Head of caudate nucleus (tissue), 42 donors: ENCODE measurements at regions of chr1 and their contacts with region 1.

Region 1: GRCh38 chr1:53238197-53239155 is at the start of gene MAGOH:
- DNase-seq: peak; percentile 91 to 99 (median 97)

Region 2: DNA sequence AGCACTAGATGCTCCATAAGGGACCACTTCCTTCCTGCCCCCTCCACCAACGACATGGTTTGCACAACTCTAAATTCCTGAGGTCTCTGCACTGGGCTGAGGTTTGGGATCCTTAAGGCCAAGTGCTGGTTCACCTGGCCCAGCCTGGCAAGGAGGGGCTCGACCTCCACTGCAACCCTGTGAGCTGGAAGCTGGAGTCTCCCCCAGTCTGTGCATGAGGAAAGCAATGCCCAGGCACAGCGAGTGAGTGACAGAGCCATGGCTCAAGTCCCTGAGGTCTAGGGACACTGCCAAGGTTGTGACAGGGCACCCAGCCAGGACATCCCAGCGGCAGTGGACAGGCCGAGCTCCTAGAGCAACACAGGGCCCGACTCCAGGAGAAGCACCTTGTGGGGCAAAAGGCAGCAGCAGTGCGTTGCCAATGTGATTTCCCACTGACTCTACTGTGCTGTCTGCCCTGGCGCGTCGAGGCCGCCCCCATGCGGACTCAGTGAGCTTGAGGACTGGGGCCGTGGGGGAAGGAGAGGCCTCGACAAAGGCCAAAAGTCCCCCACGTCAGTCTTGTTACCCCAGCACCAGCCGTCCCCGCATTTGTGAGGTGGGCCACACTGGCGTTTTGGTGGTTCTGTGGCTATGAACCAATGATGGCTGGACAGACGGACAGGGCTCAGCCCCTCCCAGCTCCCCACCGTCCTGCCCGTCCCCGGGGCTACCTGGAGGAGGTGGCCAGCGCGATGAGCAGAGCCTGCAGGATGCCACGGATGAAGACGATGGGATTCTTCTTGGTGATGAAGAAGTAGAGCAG is 146.4 kb before region 1 on chr1:
- intact Hi-C with region 1: no loop called
- DNase-seq: peak in 40 of 42 donors; percentile 13 to 74 (median 42)

Region 3: GRCh38 chr1:53220171-53220961 is 18.1 kb before region 1 on chr1 and contains the start of gene CZIB:
- intact Hi-C with region 1: loop called (anchors 1 kb)
- DNase-seq: peak; percentile 73 to 96 (median 91)

Region 4: DNA sequence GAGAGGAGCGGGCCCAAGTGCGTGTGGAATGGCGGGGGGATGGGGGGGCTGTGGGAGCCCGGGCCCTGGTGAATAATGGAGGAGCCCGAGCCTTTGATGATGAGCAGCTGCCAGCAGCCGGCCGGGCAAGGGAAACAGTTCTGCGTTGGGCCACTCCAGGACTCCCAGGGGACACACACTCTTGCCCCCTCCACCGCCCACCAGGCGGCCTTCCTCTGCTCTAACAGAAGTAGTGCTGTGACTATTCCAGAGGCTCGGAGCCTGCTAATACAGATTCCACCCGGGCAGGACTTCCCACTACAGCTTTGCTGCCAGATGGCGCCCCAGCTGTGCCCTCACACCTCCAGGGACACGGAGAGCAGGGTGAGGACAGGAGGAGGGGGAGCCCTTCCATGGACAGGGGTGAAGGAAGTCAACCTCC is 137.6 kb after region 1 on chr1:
- intact Hi-C with region 1: no loop called
- DNase-seq: peak in 7 of 42 donors; percentile 7 to 39 (median 21)